AG04450 (cell line): ENCODE measurements at regions of chr20 and their contacts with region 1.

Region 1: GRCh38 chr20:37081717-37082289 is 14.0 kb downstream of the RBL1 start:
- DNase-seq: no peak
- H3K4me3 ChIP-seq: no peak overlapping the region
- H3K27ac ChIP-seq: no peak overlapping the region
- H3K27me3 ChIP-seq: no peaks in the 10 kb centered on the region
- CTCF ChIP-seq: peak; percentile 59

Region 2: GRCh38 chr20:37007898-37008649 is 73.7 kb before region 1 on chr20:
- CTCF ChIA-PET with region 1: interaction called, 25 read pairs
- POLR2A ChIA-PET with region 1: no interaction called
- DNase-seq: no peak
- H3K4me3 ChIP-seq: no peak overlapping the region
- H3K27ac ChIP-seq: no peak overlapping the region
- H3K27me3 ChIP-seq: no peaks in the 10 kb centered on the region
- CTCF ChIP-seq: peak; percentile 33; the same call in 1 of the 2 replicates

Region 3: DNA sequence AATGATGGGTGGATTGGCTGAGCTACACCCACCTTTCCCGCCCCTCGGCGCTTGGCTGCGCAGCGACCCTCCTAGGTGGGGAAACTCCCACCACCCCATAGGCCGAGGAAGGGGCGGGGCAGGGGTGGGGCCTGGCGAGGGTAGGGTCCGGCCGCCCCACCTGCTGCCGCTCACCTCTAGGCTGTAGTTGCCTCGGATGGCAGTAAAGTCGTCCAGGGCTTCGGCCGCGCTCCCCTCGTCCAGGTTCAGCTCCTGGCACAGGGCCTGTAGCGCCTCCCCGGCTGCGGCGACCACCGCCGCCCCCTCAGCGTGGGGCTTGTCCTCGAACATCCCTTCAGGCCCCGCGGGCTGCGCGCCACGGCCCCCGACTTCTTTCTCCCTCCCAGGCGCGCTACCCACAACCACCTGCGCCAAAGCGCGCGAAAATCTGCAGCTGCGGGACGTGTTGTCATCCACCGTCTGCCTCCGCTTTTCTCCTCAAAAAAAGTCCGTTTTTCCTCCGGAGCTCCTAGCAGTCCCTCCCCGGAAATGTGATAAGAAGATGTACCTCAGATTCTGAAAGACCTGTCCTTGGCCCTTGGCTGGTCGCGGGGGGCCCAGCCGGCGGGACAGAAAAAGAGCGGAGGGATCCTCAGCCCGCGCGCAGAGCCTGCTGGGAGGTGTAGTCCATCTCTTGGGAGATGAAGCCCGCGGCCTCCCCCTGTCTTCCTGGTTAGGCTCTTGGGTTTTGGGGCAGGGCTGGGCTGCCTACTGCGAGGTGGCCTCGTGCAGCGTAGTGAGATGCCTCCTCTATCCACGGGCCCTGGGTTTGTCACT is 14.0 kb after region 1 on chr20 and contains the start of gene RBL1:
- CTCF ChIA-PET with region 1: interaction called, 10 read pairs
- POLR2A ChIA-PET with region 1: no interaction called
- DNase-seq: peak; percentile 50
- H3K4me3 ChIP-seq: peak within 1 kb of the TSS; percentile 79
- H3K27ac ChIP-seq: peak within 1 kb of the TSS; percentile 31
- H3K27me3 ChIP-seq: no peaks in the 10 kb centered on the region
- CTCF ChIP-seq: peak; percentile 49
- polyA plus RNA-seq, gene RBL1: 2.8 and 4.2 TPM in 2 replicates

Region 4: DNA sequence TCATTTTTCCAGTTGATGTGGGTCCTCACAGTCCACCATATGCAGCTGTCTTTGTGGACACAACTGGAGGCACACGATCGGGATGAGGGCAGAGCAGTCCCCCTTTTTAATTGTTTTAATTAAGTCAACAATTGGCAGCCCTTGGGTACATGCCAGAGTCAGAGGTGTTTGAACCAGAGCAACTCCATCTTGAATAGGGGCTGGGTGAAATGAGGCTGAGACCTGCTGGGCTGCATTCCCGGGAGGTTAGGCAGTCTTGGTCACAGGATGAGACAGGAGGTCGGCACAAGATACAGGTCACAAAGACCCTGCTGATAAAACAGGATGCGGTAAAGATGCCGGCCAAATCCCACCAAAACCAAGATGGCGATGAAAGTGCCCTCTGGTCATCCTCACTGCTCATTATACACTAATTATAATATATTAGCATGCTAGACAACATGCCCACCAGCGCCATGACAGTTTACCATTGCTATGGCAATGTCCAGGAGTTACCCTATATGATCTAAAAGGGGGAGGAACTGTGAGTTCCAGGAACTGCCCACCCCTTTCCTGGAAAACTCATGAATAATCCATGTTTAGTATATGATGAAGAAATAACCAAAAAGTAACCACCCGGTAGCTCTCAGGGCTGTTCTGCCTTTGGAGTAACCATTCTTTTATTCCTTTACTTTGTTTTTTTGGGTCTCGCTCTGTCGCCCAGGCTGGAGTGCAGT is 477.7 kb after region 1 on chr20:
- CTCF ChIA-PET with region 1: interaction called, 12 read pairs
- POLR2A ChIA-PET with region 1: no interaction called
- DNase-seq: no peak
- H3K4me3 ChIP-seq: no peak overlapping the region
- H3K27ac ChIP-seq: no peak overlapping the region
- H3K27me3 ChIP-seq: peaks cover 32% of the 10 kb centered on the region
- CTCF ChIP-seq: no peak